ENCODE measurements at regions of chr11 and their contacts with region 1.

Region 1: DNA sequence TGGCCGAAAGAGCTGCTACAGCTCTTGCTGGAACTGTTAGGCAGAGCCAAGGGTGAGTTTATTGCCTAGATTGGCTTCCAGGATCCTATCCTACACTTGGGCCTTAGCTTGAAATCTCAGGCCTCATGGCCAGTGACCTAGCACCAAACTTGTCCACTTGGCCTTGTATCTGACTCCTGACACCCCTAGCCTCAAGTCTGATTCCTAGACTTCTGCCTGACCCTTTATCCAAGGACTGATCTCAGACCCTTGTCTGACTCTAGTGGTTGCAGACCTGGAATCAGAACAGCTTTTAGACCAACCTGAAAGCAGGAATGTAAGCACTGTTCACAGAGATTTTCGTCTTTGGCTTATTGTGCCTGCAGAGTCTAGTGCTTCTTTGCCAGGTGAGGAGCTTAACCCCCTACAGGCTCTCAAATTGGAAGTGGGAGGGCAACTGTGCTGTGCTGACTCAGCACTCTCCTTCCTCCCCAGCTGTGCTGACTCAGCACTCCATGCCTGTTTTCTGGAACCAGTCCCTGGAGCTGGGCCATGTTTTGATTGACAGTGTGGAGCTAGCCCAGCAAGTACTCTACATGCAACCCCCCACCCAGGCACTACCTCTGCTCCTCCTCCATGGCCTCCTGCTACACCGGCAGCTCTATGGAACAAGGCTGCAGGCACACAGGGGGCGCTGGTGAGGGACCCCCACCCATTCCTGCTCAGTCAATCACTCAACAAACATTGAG is 35.1 kb downstream of the RRP8 start:
- DNase-seq: peak in 1 of 2 experiments; percentile 65
- H3K4me3 ChIP-seq: no peak overlapping the region
- H3K27ac ChIP-seq: no peak overlapping the region
- H3K4me1 ChIP-seq: peaks cover 0 to 9% (median 4%) of the 10 kb centered on the region in 4 experiments; a peak in 5 of 7 replicates
- H3K27me3 ChIP-seq: no peaks in the 10 kb centered on the region
- CTCF ChIP-seq: peak; percentile 35 to 68 (median 60)
- EP300 ChIP-seq: no peak
- POLR2A ChIP-seq: no peak
- RAD21 ChIP-seq: peak; percentile 6 to 23; a peak in 2 of 4 replicates

Region 2: GRCh38 chr11:6544921-6545850 is 23.2 kb before region 1 on chr11:
- CTCF ChIA-PET with region 1: interaction called, 20 read pairs
- POLR2A ChIA-PET with region 1: no interaction called
- DNase-seq: no peak
- H3K4me3 ChIP-seq: no peak overlapping the region
- H3K27ac ChIP-seq: no peak overlapping the region; the same call in 1 of the 2 replicates
- H3K4me1 ChIP-seq: no peaks in the 10 kb centered on the region
- H3K27me3 ChIP-seq: no peaks in the 10 kb centered on the region
- CTCF ChIP-seq: no peak
- EP300 ChIP-seq: no peak
- POLR2A ChIP-seq: no peak
- RAD21 ChIP-seq: no peak

Region 3: DNA sequence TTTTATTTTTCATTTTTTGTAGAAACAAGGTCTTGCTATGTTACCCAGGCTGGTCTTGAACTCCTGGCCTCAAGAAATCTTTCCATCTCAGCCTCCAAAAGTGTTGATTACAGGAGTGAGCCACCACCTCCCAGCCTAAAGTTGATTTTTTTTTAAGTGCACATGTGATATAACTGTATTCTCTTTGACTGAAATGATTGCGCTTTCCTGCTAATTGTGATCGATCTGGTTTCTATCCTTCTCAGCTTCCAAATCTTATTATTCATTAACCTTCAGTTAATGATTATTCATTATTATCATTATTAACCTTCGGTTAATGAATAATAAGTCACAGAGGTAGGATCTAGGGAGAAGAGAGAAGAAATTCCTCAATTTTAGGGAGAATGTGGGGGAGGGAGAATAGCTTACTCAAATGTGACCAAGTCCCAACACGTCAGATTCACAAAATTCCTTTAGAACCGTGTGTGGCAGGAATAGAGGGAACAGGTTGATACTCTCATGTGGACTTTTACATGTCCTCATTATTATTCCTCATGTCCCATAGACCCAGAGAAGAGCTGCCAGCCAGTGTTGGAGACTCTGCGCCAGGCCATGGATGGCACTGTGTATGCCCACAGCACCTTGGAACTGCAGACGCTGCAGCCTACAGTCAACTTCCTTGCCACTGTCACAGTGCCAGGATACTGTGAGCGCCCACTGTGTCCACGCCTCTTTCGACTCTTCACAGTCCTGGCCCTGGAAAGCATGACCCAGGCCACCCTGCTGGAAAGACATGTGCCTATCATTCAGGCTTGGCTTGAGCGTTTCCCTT is 12.0 kb before region 1 on chr11:
- CTCF ChIA-PET with region 1: interaction called, 48 read pairs
- POLR2A ChIA-PET with region 1: interaction called, 5 read pairs
- DNase-seq: no peak
- H3K4me3 ChIP-seq: no peak overlapping the region
- H3K27ac ChIP-seq: no peak overlapping the region
- H3K4me1 ChIP-seq: no peaks in the 10 kb centered on the region
- H3K27me3 ChIP-seq: no peaks in the 10 kb centered on the region
- CTCF ChIP-seq: no peak
- EP300 ChIP-seq: no peak
- POLR2A ChIP-seq: no peak
- RAD21 ChIP-seq: no peak

Region 4: DNA sequence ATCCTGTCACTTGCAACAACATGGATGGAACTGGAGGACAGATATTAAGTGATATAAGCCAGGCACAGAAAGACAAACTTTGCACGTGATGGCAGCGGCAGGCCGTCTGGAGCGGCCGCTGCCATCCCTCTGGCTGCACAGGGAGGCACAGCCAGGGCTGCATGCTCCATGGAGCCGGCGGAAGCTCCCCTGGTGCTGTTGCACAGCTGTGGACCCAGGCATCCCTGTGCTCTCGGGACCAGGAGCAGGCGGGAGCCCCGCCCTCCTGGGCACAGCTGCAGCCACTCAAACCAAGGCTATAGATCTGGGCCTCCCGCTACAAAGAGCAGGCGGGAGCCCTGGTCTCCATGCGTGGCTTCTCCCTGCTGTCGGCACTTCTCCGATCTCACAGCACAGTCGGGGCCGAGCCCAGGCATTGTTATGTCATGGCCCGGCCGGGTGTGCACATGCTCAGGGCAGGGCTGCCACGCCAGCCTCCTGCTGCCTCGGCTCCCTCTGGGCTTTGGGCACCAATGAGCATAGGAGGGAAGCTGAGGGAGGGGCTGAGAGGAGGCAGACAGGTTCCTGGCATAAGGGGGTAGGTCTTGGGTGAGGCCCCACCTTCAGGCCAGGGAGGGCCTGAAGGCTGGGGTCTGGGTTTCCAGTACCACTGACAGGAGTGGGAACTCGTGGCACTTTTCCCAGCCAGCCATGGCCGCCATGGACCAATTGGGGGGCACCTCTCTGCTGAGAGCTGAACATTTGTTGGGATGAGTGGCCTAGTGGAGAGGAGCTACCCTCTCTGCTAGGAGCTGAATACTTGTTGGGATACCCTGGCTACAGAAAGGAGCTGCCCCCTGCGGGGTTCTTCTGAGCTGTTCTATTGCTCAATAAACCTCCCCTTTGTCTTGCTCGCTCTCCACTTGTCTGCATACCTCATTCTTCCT is 18.3 kb after region 1 on chr11:
- CTCF ChIA-PET with region 1: interaction called, 26 read pairs
- POLR2A ChIA-PET with region 1: interaction called, 4 read pairs
- DNase-seq: peak in 1 of 2 experiments; percentile 43
- H3K4me3 ChIP-seq: peak overlapping the region in 3 of 4 experiments; percentile 37 to 55 (median 49); a peak in 6 of 8 replicates
- H3K27ac ChIP-seq: peak overlapping the region; percentile 64
- H3K4me1 ChIP-seq: peaks cover 0 to 16% (median 10%) of the 10 kb centered on the region in 4 experiments; a peak in 5 of 7 replicates
- H3K27me3 ChIP-seq: no peaks in the 10 kb centered on the region
- CTCF ChIP-seq: no peak
- EP300 ChIP-seq: no peak
- POLR2A ChIP-seq: no peak; a peak in 1 of 3 replicates
- RAD21 ChIP-seq: 0 out of 4 replicates have a peak, but pooled peaks of 1 of the 2 experiments have one; percentile 1

Region 5: DNA sequence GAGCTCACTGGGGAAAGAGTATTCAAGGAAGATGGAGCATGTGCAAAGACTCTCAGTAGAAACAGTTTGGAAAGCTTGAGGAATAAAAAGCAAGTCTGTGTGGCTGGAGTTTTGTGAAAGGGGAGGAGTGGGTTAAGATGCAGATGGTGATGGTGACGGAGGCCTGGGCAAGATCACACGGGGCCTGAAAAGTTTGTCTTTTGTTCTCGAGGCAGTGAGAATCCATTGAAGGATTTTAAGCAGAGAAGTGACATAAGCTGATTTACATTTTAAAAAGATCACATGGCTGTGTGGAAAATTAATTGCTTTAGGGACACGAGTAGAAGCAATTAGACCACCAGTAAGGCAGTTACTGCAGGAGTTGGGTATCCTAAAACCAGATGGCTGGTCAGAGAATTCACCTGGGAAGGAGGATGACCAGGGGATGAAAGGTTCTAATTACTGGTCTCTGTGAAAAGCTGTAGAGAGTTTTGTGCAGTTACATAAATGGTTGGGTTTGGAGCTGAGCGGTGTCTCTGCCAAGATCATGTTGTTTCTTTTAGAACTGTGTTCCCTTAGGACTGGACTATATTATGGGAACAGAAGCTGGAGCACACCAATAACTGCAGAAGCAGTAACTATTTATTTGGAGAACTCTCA is 28.0 kb after region 1 on chr11:
- CTCF ChIA-PET with region 1: interaction called, 26 read pairs
- POLR2A ChIA-PET with region 1: no interaction called
- DNase-seq: peak in 1 of 2 experiments; percentile 16
- H3K4me3 ChIP-seq: no peak overlapping the region
- H3K27ac ChIP-seq: no peak overlapping the region
- H3K4me1 ChIP-seq: no peaks in the 10 kb centered on the region
- H3K27me3 ChIP-seq: no peaks in the 10 kb centered on the region
- CTCF ChIP-seq: no peak
- EP300 ChIP-seq: no peak
- POLR2A ChIP-seq: no peak
- RAD21 ChIP-seq: no peak

Region 6: GRCh38 chr11:6603287-6604080 is 35.1 kb after region 1 on chr11 and contains the starts of genes ILK and RRP8:
- CTCF ChIA-PET with region 1: interaction called, 10 read pairs
- POLR2A ChIA-PET with region 1: interaction called, 7 read pairs
- DNase-seq: peak in 1 of 2 experiments; percentile 91
- H3K4me3 ChIP-seq: peak within 1 kb of the TSS; percentile 79 to 99 (median 93)
- H3K27ac ChIP-seq: peak within 1 kb of the TSS; percentile 63; the same call in 1 of the 2 replicates
- H3K4me1 ChIP-seq: peaks cover 5 to 21% (median 8%) of the 10 kb centered on the region in 4 experiments; a peak in 6 of 7 replicates
- H3K27me3 ChIP-seq: no peaks in the 10 kb centered on the region
- CTCF ChIP-seq: no peak
- EP300 ChIP-seq: peak in 1 of 2 experiments; percentile 79; a peak in 1 of 3 replicates
- POLR2A ChIP-seq: peak in 1 of 2 experiments; percentile 81; a peak in 2 of 3 replicates
- RAD21 ChIP-seq: peak in 1 of 2 experiments; percentile 17; a peak in 2 of 4 replicates
- total RNA-seq, gene ILK: 91.4 and 103 TPM in 2 replicates
- total RNA-seq, gene RRP8: 14.9 and 15.4 TPM in 2 replicates

Region 7: DNA sequence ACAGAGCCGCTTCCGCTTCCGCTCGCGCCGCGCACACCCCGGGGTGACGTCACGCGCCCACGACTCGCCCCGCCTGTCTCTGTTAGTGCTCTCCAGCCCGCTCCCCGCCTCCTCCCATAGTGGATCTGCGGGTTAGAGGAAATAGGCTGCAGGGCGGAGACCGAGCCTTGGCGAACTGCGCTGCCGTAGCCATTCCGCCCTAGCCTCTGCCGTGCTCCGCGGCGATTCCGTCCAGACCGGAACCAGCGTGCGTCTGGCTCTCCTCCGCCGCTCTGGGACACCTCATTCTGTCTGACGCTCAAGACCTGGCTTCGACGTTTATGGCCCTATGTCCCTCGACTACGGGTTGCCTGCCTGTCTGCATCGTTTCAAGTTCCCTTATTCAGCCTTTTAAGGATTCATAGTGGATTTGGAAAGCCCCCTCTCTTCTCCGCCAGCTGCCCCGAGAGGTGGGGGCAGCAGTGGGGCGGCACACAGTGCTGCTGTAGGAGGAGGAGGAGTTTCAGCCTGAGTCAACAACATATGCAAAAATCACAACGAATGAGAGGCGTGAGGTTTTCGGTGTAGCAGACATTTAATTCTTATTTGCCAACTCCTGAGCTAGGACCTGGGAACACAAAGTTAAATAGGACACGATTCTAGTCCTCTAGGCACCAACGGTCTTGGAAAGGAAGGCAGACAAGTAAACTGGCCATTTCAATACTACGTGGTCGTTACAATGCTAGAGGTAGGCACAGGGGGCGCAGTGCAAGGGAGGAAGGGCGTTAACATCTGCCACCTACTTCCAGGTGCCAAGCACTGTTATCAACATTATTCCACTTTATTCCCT is 44.1 kb after region 1 on chr11 and contains the start of gene TAF10:
- CTCF ChIA-PET with region 1: interaction called, 4 read pairs
- POLR2A ChIA-PET with region 1: interaction called, 14 read pairs
- DNase-seq: peak in 1 of 2 experiments; percentile 92
- H3K4me3 ChIP-seq: peak within 1 kb of the TSS; percentile 67 to 85 (median 76)
- H3K27ac ChIP-seq: peak within 1 kb of the TSS; percentile 94
- H3K4me1 ChIP-seq: peaks cover 0 to 11% (median 5%) of the 10 kb centered on the region in 4 experiments; a peak in 6 of 7 replicates
- H3K27me3 ChIP-seq: no peaks in the 10 kb centered on the region
- CTCF ChIP-seq: peak; percentile 70 to 87 (median 83)
- EP300 ChIP-seq: no peak
- POLR2A ChIP-seq: peak; percentile 75 to 92
- RAD21 ChIP-seq: peak; percentile 41 to 50
- total RNA-seq, gene TAF10: 128 and 153 TPM in 2 replicates